ENCODE measurements at regions of chr2 and their contacts with region 1.

Region 1: DNA sequence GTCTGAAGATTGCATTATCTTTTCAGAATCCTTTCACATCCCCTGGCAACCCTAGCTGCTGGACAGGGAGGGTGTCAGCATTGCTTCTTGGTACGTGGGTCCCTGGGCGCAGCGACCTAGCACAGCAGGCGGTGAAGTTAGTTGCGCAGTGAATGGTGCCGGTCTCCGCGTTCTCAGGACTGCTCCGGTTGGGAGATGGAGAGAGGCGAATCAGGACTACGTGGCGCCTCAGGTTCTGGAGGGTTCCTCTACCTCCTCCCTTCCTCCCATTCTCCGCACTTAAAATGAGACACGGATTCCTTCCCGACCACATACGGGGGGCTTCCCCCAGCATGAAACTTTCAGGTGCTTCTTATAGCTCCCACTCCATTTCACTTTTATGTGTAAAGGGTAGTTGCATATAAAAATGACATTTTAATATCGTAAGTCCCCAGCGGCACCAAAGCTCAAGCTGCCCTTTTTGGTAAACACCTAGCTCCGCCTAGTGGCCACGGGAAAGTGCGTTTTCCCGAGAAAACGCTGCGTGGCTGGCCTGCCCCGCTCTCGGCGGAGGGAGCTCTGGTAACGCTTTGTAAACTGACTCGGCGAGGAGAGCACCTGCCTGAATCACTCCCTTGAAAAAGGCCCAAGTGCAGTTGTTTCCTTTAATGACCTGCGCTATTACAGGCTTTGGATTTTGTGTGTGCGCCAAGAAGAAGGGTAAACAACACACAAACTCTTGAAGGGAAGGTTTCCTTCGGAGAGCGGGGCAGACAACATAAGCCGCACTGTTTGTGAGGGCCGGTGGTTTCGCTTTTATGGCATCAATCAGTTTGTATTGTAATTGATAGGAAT is 32.9 kb upstream of the INHBB start:
- DNase-seq: peak; percentile 46 to 77 (median 67)
- ATAC-seq: peak; percentile 78
- H3K4me3 ChIP-seq: peak overlapping the region; percentile 49
- H3K4me3 Mint-ChIP-seq: peak overlapping the region; percentile 76 to 92 (median 86)
- H3K27ac ChIP-seq: peak overlapping the region; percentile 8
- H3K27ac Mint-ChIP-seq: peak overlapping the region; percentile 32 to 91 (median 67)
- H3K4me1 ChIP-seq: peaks cover 3 to 19% of the 10 kb centered on the region in 2 donors
- H3K4me1 Mint-ChIP-seq: peaks cover 7 to 45% (median 34%) of the 10 kb centered on the region in 7 donors
- H3K27me3 ChIP-seq: no peaks in the 10 kb centered on the region
- H3K27me3 Mint-ChIP-seq: peaks cover 0 to 4% (median 0%) of the 10 kb centered on the region in 5 donors

Region 2: GRCh38 chr2:119753041-119753929 is 559.8 kb before region 1 on chr2:
- CTCF ChIA-PET with region 1: no interaction called
- POLR2A ChIA-PET with region 1: no interaction called
- intact Hi-C with region 1: loop called (anchors 1 to 10 kb)
- DNase-seq: peak in 7 of 9 donors; percentile 35 to 63 (median 52)
- ATAC-seq: peak; percentile 86
- H3K4me3 ChIP-seq: no peak overlapping the region
- H3K4me3 Mint-ChIP-seq: no peak overlapping the region
- H3K27ac ChIP-seq: no peak overlapping the region
- H3K27ac Mint-ChIP-seq: peak overlapping the region in 1 of 9 donors; percentile 37
- H3K4me1 ChIP-seq: no peaks in the 10 kb centered on the region
- H3K4me1 Mint-ChIP-seq: peaks cover under 1 to 10% (median 6%) of the 10 kb centered on the region in 7 donors
- H3K27me3 ChIP-seq: no peaks in the 10 kb centered on the region
- H3K27me3 Mint-ChIP-seq: peaks cover 0 to 23% (median 0%) of the 10 kb centered on the region in 5 donors

Region 3: GRCh38 chr2:120012771-120013596 is 300.1 kb before region 1 on chr2 and contains the start of gene EPB41L5:
- CTCF ChIA-PET with region 1: interaction called, 4 read pairs
- POLR2A ChIA-PET with region 1: no interaction called
- intact Hi-C with region 1: loop called (anchors 10 kb)
- DNase-seq: peak; percentile 56 to 81 (median 67)
- ATAC-seq: peak; percentile 93
- H3K4me3 ChIP-seq: peak within 1 kb of the TSS; percentile 69
- H3K4me3 Mint-ChIP-seq: peak within 1 kb of the TSS; percentile 73 to 89 (median 86)
- H3K27ac ChIP-seq: peak within 1 kb of the TSS; percentile 70
- H3K27ac Mint-ChIP-seq: peak within 1 kb of the TSS in 8 of 9 donors; percentile 36 to 75 (median 70)
- H3K4me1 ChIP-seq: peaks cover 6% of the 10 kb centered on the region in 2 donors
- H3K4me1 Mint-ChIP-seq: peaks cover 8 to 37% (median 24%) of the 10 kb centered on the region in 7 donors
- H3K27me3 ChIP-seq: no peaks in the 10 kb centered on the region
- H3K27me3 Mint-ChIP-seq: peaks cover 0 to 20% (median 0%) of the 10 kb centered on the region in 5 donors
- total RNA-seq, gene EPB41L5: 2.2 to 9.3 (median 6.8) TPM

Region 4: GRCh38 chr2:120206022-120206581 is 107.0 kb before region 1 on chr2:
- CTCF ChIA-PET with region 1: interaction called, 3 read pairs
- POLR2A ChIA-PET with region 1: no interaction called
- intact Hi-C with region 1: loop called (anchors 1 to 2 kb)
- DNase-seq: no peak
- ATAC-seq: no peak
- H3K4me3 ChIP-seq: no peak overlapping the region
- H3K4me3 Mint-ChIP-seq: no peak overlapping the region
- H3K27ac ChIP-seq: no peak overlapping the region
- H3K27ac Mint-ChIP-seq: no peak overlapping the region
- H3K4me1 ChIP-seq: peaks cover 8 to 10% of the 10 kb centered on the region in 2 donors
- H3K4me1 Mint-ChIP-seq: peaks cover 0 to 19% (median 0%) of the 10 kb centered on the region in 7 donors
- H3K27me3 ChIP-seq: no peaks in the 10 kb centered on the region
- H3K27me3 Mint-ChIP-seq: peaks cover 0 to 2% (median 0%) of the 10 kb centered on the region in 5 donors

Region 5: GRCh38 chr2:120231974-120232635 is 81.0 kb before region 1 on chr2:
- CTCF ChIA-PET with region 1: interaction called, 6 read pairs
- POLR2A ChIA-PET with region 1: interaction called, 6 read pairs
- intact Hi-C with region 1: loop called (anchors 1 kb)
- DNase-seq: peak; percentile 19 to 82 (median 77)
- ATAC-seq: peak; percentile 93
- H3K4me3 ChIP-seq: peak overlapping the region; percentile 72
- H3K4me3 Mint-ChIP-seq: peak overlapping the region; percentile 86 to 100 (median 96)
- H3K27ac ChIP-seq: peak overlapping the region; percentile 81
- H3K27ac Mint-ChIP-seq: peak overlapping the region; percentile 93 to 98 (median 96)
- H3K4me1 ChIP-seq: peaks cover 19 to 29% of the 10 kb centered on the region in 2 donors
- H3K4me1 Mint-ChIP-seq: peaks cover 15 to 65% (median 59%) of the 10 kb centered on the region in 7 donors
- H3K27me3 ChIP-seq: no peaks in the 10 kb centered on the region
- H3K27me3 Mint-ChIP-seq: no peaks in the 10 kb centered on the region

Region 6: DNA sequence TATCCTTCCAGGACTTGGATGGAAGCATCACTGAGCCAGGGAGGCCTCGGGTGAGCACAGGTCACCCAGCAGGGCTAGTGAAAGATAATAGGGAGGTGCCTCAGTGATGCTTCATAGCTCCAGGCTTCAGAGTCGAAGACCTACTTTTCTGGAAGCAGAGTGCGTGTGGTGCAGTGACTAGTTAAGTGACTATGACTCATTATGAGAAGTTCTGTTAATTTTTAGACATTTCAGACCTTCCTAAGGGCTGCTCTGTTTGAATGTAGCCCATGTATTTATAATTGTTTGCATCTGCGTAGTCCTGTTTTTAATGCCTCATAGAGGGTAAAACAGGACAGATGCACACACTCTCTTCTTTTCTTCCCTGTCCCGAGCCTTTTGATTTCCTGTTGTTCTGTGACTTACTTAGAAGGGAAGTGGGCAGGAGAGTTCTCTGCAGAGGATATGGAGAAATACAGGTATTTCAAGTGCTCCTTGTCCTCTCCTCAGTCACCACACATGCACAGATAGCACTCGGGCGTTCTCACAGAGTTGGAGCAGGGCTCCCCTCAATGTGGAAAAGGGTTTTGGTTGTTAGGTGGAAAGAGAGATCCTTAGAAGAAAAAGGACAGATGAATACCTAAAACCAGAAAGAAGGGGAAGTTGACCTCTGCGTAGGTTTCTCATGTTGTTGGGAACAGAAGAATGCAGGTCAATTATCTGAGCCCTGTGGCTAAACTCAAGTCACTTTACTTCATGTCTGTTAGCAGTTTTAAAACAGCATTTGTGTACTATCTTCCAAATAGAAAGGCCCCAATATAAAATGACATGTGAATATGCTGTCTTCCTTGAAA is 25.7 kb before region 1 on chr2:
- CTCF ChIA-PET with region 1: interaction called, 11 read pairs
- POLR2A ChIA-PET with region 1: no interaction called
- intact Hi-C with region 1: no loop called
- DNase-seq: peak in 1 of 9 donors; percentile 34
- ATAC-seq: peak; percentile 63
- H3K4me3 ChIP-seq: no peak overlapping the region
- H3K4me3 Mint-ChIP-seq: peak overlapping the region in 3 of 10 donors; percentile 18 to 86 (median 30)
- H3K27ac ChIP-seq: no peak overlapping the region
- H3K27ac Mint-ChIP-seq: peak overlapping the region in 6 of 9 donors; percentile 28 to 91 (median 64)
- H3K4me1 ChIP-seq: peaks cover 0 to 11% of the 10 kb centered on the region in 2 donors
- H3K4me1 Mint-ChIP-seq: peaks cover 13 to 76% (median 26%) of the 10 kb centered on the region in 7 donors
- H3K27me3 ChIP-seq: no peaks in the 10 kb centered on the region
- H3K27me3 Mint-ChIP-seq: no peaks in the 10 kb centered on the region

Measured in naive thymus-derived CD4-positive, alpha-beta T cell (primary cell).